HepG2 (cell line): ENCODE measurements at regions of chr13 and their contacts with region 1.

Region 1: GRCh38 chr13:46553886-46554858 is 1.2 kb downstream of the LRCH1 start:
- DNase-seq: peak; percentile 86
- ATAC-seq: peak; percentile 82
- H3K4me3 ChIP-seq: peak overlapping the region; percentile 69 to 98 (median 79)
- H3K27ac ChIP-seq: peak overlapping the region; percentile 71
- H3K4me1 ChIP-seq: peaks cover 34% of the 10 kb centered on the region
- H3K27me3 ChIP-seq: no peaks in the 10 kb centered on the region; a peak in 1 of 5 replicates
- CTCF ChIP-seq: peak; percentile 38; the same call in 1 of the 2 replicates
- EP300 ChIP-seq: no peak
- POLR2A ChIP-seq: no peak; a peak in 1 of 4 replicates
- RAD21 ChIP-seq: no peak

Region 2: GRCh38 chr13:46015366-46015765 is 538.8 kb before region 1 on chr13:
- CTCF ChIA-PET with region 1: no interaction called
- POLR2A ChIA-PET with region 1: no interaction called
- in situ Hi-C with region 1: no loop called
- intact Hi-C with region 1: no loop called
- DNase-seq: no peak
- ATAC-seq: no peak
- H3K4me3 ChIP-seq: no peak overlapping the region
- H3K27ac ChIP-seq: no peak overlapping the region
- H3K4me1 ChIP-seq: no peaks in the 10 kb centered on the region
- H3K27me3 ChIP-seq: no peaks in the 10 kb centered on the region
- CTCF ChIP-seq: no peak
- EP300 ChIP-seq: no peak
- POLR2A ChIP-seq: no peak
- RAD21 ChIP-seq: no peak

Region 3: DNA sequence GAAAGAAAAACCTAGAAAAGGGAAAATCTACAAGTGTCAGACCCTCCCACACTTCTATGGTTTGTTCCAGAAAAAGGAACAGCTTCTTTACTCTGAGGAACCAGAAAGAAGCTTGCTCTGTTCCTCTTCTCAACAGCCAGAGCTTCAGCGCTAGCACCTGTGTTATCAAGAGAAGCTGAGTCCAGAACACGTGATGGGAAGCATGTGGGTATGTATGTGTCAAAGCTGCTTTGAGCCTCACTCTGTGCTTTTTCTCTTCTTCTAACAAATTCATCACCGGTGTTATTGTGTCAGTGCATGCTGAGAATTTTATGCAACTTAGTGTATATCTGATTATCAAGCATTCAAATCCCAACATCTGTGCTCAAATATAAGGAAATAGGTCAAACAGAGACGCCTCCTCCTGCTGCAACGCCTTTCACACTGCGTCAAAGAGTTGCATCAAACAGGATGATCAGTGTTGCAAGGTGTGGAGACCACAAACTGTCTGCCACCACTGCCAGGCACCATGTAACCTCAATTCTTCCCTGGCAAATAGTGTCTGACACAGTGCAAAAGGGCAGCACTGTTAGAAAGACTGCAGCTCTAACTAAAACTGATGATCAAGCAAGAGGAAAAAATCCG is 258.6 kb before region 1 on chr13:
- CTCF ChIA-PET with region 1: no interaction called
- POLR2A ChIA-PET with region 1: no interaction called
- in situ Hi-C with region 1: no loop called
- intact Hi-C with region 1: no loop called
- DNase-seq: no peak
- ATAC-seq: no peak
- H3K4me3 ChIP-seq: no peak overlapping the region
- H3K27ac ChIP-seq: no peak overlapping the region
- H3K4me1 ChIP-seq: no peaks in the 10 kb centered on the region
- H3K27me3 ChIP-seq: no peaks in the 10 kb centered on the region; a peak in 1 of 5 replicates
- CTCF ChIP-seq: no peak
- EP300 ChIP-seq: no peak
- POLR2A ChIP-seq: no peak
- RAD21 ChIP-seq: no peak

Region 4: DNA sequence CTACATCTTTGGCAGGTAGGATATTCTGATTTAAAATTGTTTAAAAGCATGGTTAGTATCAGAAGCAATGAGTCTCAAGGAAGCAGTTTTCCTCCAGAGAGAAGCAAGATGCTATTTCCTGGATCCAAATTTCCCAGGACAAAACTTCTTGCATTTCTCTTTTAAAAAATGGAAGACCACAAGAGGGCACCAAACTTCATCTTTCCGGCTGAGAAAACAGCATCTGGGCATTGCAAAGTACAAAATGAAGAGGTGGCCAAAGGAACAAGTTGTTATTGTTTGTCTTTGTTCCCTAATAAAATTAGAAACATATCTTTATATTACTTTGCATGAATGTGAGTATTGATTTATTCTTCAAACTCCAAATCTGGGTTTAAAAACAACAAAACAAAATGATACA is 61.2 kb before region 1 on chr13:
- CTCF ChIA-PET with region 1: interaction called, 3 read pairs
- POLR2A ChIA-PET with region 1: no interaction called
- in situ Hi-C with region 1: no loop called
- intact Hi-C with region 1: loop called (anchors 1 kb)
- DNase-seq: peak; percentile 22
- ATAC-seq: no peak
- H3K4me3 ChIP-seq: no peak overlapping the region
- H3K27ac ChIP-seq: no peak overlapping the region
- H3K4me1 ChIP-seq: no peaks in the 10 kb centered on the region
- H3K27me3 ChIP-seq: peaks cover 0 to 3% of the 10 kb centered on the region in 2 experiments; a peak in 4 of 5 replicates
- CTCF ChIP-seq: peak; percentile 61
- EP300 ChIP-seq: no peak
- POLR2A ChIP-seq: no peak
- RAD21 ChIP-seq: peak; percentile 33; the same call in 1 of the 2 replicates

Region 5: DNA sequence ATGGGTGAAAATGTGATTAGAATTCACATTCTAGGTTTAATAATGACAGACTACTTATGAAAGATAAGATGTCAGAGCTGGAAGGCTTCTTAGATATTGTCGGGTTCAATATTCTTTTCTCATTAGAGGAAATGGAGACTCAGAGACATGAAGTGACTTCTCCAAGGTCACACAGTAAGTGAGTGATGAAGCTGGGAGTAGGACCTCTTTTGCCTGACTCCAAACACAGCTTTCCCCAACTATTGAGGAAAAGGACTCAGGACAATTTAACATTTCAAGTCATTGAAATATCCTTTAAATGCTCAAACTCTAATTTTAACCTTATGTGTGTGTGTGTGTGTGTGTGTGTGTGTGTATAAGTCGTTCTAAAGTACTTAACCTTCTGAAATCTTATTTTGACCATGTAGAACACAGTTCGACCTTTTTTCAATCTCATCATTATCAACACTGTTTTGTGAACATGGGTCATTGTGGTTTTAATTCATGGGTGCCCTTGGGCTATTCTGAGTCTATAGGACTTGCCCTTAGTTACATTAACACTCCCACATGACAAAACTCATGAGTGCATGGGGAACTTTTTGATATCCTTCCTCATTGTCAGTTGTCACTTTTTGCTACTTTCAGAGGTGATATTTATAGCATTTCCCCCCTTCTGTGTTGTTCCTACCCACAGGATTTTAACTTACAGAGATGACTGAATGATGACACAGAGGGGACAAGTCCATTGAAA is 51.8 kb after region 1 on chr13:
- CTCF ChIA-PET with region 1: no interaction called
- POLR2A ChIA-PET with region 1: no interaction called
- in situ Hi-C with region 1: no loop called
- intact Hi-C with region 1: loop called (anchors 2 kb)
- DNase-seq: no peak
- ATAC-seq: no peak
- H3K4me3 ChIP-seq: no peak overlapping the region
- H3K27ac ChIP-seq: no peak overlapping the region
- H3K4me1 ChIP-seq: peaks cover 90% of the 10 kb centered on the region
- H3K27me3 ChIP-seq: no peaks in the 10 kb centered on the region
- CTCF ChIP-seq: no peak
- EP300 ChIP-seq: no peak
- POLR2A ChIP-seq: no peak
- RAD21 ChIP-seq: no peak

Region 6: GRCh38 chr13:46655377-46656180 is 101.4 kb after region 1 on chr13:
- CTCF ChIA-PET with region 1: no interaction called
- POLR2A ChIA-PET with region 1: no interaction called
- in situ Hi-C with region 1: no loop called
- intact Hi-C with region 1: loop called (anchors 2 kb)
- DNase-seq: no peak
- ATAC-seq: no peak
- H3K4me3 ChIP-seq: no peak overlapping the region
- H3K27ac ChIP-seq: no peak overlapping the region
- H3K4me1 ChIP-seq: peaks cover 33% of the 10 kb centered on the region
- H3K27me3 ChIP-seq: no peaks in the 10 kb centered on the region
- CTCF ChIP-seq: no peak
- EP300 ChIP-seq: no peak
- POLR2A ChIP-seq: no peak
- RAD21 ChIP-seq: no peak

Region 7: DNA sequence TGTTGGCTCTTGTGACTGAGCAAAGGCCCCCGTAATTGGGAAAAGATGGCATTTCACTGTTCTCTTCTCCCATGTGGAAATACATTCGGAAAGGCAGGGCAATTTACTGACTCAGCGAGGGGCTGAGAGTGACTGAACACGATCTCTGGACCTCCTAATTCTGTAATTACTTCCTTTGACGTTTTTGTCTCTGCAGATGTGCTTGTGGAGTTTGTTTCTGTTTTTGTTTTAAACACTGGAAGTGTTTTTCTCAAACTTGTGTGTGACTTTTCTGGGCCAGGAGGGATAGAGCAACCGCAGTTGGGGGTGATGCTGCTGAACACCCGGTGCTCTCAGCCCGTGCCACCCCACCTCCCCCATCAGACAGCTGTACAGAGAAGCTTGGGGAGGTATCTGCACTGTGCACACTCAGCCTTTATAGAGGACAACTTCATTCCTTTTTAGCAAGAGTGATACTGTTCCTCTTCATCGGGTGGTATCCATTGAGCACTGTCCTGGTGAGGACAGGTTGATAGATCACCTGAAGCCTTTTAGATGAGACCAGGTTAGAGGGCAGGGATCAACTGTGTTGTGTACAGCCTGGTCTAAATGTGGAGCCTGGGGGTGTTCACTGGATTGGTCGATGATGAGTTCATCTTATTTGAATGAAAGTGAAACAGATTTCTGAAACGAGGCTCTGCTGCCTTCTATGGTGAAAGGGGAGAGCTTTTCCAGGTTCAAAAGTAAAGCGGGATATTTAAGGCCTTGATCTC is 125.4 kb after region 1 on chr13:
- CTCF ChIA-PET with region 1: no interaction called
- POLR2A ChIA-PET with region 1: no interaction called
- in situ Hi-C with region 1: no loop called
- intact Hi-C with region 1: loop called (anchors 10 kb)
- DNase-seq: peak; percentile 9
- ATAC-seq: peak; percentile 55
- H3K4me3 ChIP-seq: no peak overlapping the region
- H3K27ac ChIP-seq: no peak overlapping the region
- H3K4me1 ChIP-seq: peaks cover 83% of the 10 kb centered on the region
- H3K27me3 ChIP-seq: no peaks in the 10 kb centered on the region
- CTCF ChIP-seq: no peak
- EP300 ChIP-seq: no peak
- POLR2A ChIP-seq: no peak
- RAD21 ChIP-seq: no peak

Region 8: GRCh38 chr13:46721054-46721453 is 166.9 kb after region 1 on chr13:
- CTCF ChIA-PET with region 1: interaction called, 63 read pairs
- POLR2A ChIA-PET with region 1: no interaction called
- in situ Hi-C with region 1: loop called (anchors 5 kb)
- intact Hi-C with region 1: loop called (anchors 1 kb)
- DNase-seq: peak; percentile 33
- ATAC-seq: no peak
- H3K4me3 ChIP-seq: no peak overlapping the region
- H3K27ac ChIP-seq: no peak overlapping the region
- H3K4me1 ChIP-seq: peaks cover 15% of the 10 kb centered on the region
- H3K27me3 ChIP-seq: no peaks in the 10 kb centered on the region
- CTCF ChIP-seq: peak; percentile 68
- EP300 ChIP-seq: no peak
- POLR2A ChIP-seq: no peak
- RAD21 ChIP-seq: peak; percentile 38; the same call in 1 of the 2 replicates

Region 9: DNA sequence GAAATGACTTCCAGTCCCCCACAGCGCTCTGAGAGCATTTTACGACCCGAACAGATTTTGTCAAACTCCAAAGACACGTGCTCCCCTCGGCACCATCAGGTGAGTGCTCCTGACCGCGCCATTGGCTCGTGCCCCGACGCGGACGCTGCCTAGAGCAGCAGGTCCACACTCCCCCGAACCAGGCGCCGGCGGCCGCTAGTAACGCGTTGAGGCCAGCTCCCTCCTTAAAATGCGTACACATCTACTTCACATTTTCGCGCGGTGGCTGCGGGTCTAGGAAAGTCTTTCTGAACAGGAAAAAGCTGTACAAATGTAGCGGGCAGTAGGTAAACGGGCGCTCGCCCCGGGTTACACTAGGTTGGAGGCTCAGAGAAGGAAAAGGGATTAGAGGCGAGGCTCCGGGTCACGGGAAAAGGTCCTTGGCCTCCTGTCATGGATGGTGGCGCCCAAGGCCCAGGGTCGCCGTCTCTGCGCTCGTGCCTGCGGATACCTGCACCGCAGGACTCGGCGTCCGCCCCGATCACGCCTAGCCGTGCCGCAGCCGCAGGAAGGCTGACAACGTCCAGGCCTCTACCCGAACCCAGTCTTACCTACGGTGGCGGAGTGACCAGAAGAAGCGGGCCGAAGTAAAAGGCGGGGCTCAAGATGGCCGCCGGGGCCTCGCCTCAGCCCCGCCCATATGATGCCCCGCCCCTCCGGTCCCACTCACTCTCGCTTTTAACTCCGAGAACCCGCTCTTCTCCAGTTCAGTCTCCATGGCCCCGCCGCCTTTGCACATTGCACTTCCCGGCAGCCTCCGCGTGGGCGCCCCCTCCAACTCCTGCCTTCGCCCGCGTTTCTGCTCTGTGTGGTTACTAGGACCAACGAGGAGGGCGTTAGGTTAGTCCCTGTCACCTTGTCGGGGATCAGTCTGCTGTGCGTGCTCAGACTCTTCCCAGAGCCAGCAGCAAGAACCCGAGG is 242.6 kb after region 1 on chr13 and contains the start of gene ESD:
- CTCF ChIA-PET with region 1: no interaction called
- POLR2A ChIA-PET with region 1: no interaction called
- in situ Hi-C with region 1: no loop called
- intact Hi-C with region 1: loop called (anchors 5 kb)
- DNase-seq: peak; percentile 90
- ATAC-seq: peak; percentile 94
- H3K4me3 ChIP-seq: peak within 1 kb of the TSS; percentile 60 to 95 (median 85)
- H3K27ac ChIP-seq: peak within 1 kb of the TSS; percentile 94
- H3K4me1 ChIP-seq: peaks cover 63% of the 10 kb centered on the region
- H3K27me3 ChIP-seq: no peaks in the 10 kb centered on the region; a peak in 1 of 5 replicates
- CTCF ChIP-seq: peak; percentile 24
- EP300 ChIP-seq: no peak
- POLR2A ChIP-seq: peak; percentile 75 to 89
- RAD21 ChIP-seq: no peak
- total RNA-seq, gene ESD: 147 and 234 TPM in 2 replicates

Region 10: GRCh38 chr13:46831588-46832194 is 277.5 kb after region 1 on chr13:
- CTCF ChIA-PET with region 1: no interaction called
- POLR2A ChIA-PET with region 1: no interaction called
- in situ Hi-C with region 1: no loop called
- intact Hi-C with region 1: no loop called
- DNase-seq: peak; percentile 22
- ATAC-seq: peak; percentile 54; the same call in 1 of the 3 replicates
- H3K4me3 ChIP-seq: no peak overlapping the region
- H3K27ac ChIP-seq: no peak overlapping the region
- H3K4me1 ChIP-seq: no peaks in the 10 kb centered on the region
- H3K27me3 ChIP-seq: no peaks in the 10 kb centered on the region
- CTCF ChIP-seq: peak; percentile 76
- EP300 ChIP-seq: no peak
- POLR2A ChIP-seq: no peak
- RAD21 ChIP-seq: 0 out of 2 replicates have a peak, but pooled peaks have one; percentile 23